ENCODE measurements at regions of chr11 and their contacts with region 1.

Region 1: GRCh38 chr11:114180301-114181055 is 115.7 kb upstream of the NNMT start:
- DNase-seq: peak in 4 of 10 donors; percentile 41 to 64 (median 58)
- H3K4me3 ChIP-seq: peak overlapping the region in 51 of 59 donors; percentile 7 to 56 (median 33)
- H3K27ac ChIP-seq: peak overlapping the region; percentile 74 to 100 (median 96)
- H3K27me3 ChIP-seq: no peaks in the 10 kb centered on the region
- CTCF ChIP-seq: peak; percentile 19 to 78 (median 66)

Region 2: DNA sequence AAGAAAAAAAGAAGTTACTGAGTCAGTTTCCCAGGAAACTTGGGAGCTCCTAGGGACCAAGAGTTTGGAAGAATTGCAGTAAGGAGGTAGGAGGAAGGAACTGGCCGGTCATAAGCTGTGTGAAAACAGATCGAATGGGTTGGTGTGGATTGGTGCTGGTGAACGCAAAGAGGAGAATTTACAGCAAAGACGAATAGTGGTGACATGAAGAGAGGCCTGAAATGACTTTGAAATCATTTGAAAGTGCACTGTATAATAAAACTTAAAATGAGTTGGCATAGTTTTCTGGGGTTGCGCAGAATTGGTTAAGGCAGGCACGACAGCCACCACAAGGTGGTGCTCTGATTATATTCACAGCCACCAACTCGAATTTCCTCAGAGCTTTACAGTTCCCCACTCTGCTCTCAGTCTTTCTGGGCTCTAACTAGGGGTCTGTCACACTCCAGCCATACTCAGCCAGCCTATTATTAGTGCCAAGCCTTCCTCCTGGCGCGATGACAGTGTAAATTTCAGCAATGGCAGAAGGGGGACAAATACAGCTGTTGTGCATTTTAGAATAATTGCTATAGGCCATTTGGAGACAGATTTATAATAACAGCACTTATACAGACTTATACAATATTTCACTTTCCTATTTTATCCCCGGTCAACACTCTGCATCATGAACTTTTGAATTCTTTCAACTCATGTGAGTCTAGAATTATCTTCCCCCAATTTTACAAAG is 284.2 kb before region 1 on chr11:
- intact Hi-C with region 1: loop called in 1 of 2 experiments (anchors 10 kb)
- DNase-seq: peak in 7 of 10 donors; percentile 36 to 67 (median 45)
- H3K4me3 ChIP-seq: no peak overlapping the region
- H3K27ac ChIP-seq: peak overlapping the region in 28 of 59 donors; percentile 3 to 75 (median 46)
- H3K27me3 ChIP-seq: no peaks in the 10 kb centered on the region
- CTCF ChIP-seq: peak; percentile 59 to 90 (median 80)

Region 3: DNA sequence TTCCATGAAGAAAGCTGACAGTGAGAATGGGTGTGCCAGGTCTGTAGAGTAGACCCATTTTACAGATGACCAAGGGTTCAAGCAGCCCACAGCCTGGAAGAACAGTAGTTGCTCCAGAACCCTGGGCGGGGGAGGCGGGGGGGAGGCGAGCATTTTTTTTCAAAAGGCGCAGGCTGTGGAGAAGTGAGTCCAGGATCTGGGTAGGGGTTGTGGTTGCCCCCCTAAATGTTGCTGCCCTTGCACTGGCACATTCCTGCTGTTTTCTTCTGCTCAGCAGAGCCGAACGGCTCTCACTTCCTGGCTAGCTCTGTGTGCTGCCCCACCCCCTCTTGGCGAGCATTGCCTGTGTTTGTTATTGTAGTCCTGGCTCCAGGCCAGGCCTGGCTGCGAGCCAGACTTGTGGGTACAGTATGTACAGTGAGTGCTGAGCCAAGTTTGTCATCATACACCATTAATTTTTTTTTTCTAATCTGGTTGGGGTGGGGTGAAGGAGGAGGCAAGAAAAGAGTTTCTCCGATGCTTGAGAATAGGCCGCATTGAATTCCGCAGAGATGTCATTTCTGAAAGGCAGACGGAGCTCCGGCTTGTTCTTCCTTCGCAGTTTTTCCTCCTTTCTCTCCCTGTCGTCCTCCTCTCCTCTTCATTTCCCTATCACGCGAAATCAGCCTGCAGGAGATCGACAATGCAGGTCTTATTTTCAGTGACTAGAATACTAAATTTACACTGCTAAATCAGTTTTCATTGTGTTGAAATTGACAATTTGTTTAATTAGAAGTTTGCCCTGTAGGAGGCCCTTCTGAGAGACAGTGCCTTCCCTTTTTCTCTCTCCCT is 20.5 kb before region 1 on chr11:
- intact Hi-C with region 1: loop called (anchors 1 to 2 kb)
- DNase-seq: peak; percentile 86 to 97 (median 90)
- H3K4me3 ChIP-seq: peak overlapping the region in 45 of 59 donors; percentile 1 to 48 (median 27)
- H3K27ac ChIP-seq: peak overlapping the region; percentile 97 to 100 (median 100)
- H3K27me3 ChIP-seq: no peaks in the 10 kb centered on the region
- CTCF ChIP-seq: peak in 23 of 56 donors; percentile 5 to 32 (median 19)

Region 4: GRCh38 chr11:114257621-114258558 is 77.4 kb after region 1 on chr11:
- intact Hi-C with region 1: loop called (anchors 5 kb)
- DNase-seq: peak in 4 of 10 donors; percentile 41 to 54 (median 48)
- H3K4me3 ChIP-seq: peak overlapping the region in 8 of 59 donors; percentile 5 to 31 (median 14)
- H3K27ac ChIP-seq: peak overlapping the region in 58 of 59 donors; percentile 15 to 88 (median 74)
- H3K27me3 ChIP-seq: no peaks in the 10 kb centered on the region
- CTCF ChIP-seq: peak in 31 of 56 donors; percentile 8 to 50 (median 27)

Region 5: GRCh38 chr11:114270531-114271270 is 90.2 kb after region 1 on chr11:
- intact Hi-C with region 1: no loop called
- DNase-seq: no peak
- H3K4me3 ChIP-seq: no peak overlapping the region
- H3K27ac ChIP-seq: no peak overlapping the region
- H3K27me3 ChIP-seq: peaks cover 0 to 15% (median 0%) of the 10 kb centered on the region in 45 donors
- CTCF ChIP-seq: no peak

Measured in dorsolateral prefrontal cortex (tissue), 120 donors.